ENCODE measurements at regions of chr7 and their contacts with region 1.

Region 1: GRCh38 chr7:88344956-88345832 is 38.5 kb upstream of the STEAP4 start:
- DNase-seq: peak; percentile 10 to 58
- H3K4me3 ChIP-seq: no peak overlapping the region
- H3K27ac ChIP-seq: no peak overlapping the region
- H3K4me1 ChIP-seq: peaks cover 0 to 8% (median 2%) of the 10 kb centered on the region in 4 experiments; a peak in 4 of 7 replicates
- H3K27me3 ChIP-seq: no peaks in the 10 kb centered on the region
- CTCF ChIP-seq: peak; percentile 70 to 77 (median 73)
- EP300 ChIP-seq: no peak
- POLR2A ChIP-seq: no peak
- RAD21 ChIP-seq: peak; percentile 88 to 91

Region 2: DNA sequence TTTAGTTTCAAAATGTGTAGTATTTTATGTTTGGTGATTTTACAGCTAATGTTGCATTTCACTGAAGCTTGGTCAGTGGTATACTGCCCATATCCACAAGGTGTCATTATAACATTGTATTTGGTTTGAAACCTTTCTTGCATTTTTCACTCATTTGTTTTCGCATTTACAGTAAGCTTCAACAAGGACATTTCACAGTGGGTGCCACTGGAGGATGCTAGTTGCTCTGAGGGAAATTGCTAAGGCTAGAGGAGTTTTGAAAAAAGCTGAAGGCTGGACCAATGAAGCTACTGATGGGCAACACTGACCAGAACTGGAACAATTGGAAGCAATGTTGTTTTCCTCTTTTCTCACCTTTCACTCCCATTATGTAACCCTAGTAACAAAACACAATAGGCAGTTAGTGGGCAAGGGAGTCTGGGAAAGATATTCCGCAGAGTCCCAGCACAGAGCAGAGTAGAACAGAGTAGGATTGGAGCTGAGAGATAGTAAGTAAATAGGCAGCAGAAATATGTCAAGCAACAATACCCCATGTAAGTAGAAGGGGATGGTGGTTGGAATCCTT is 101.8 kb before region 1 on chr7:
- CTCF ChIA-PET with region 1: interaction called, 22 read pairs
- POLR2A ChIA-PET with region 1: no interaction called
- DNase-seq: peak in 1 of 2 experiments; percentile 45
- H3K4me3 ChIP-seq: no peak overlapping the region
- H3K27ac ChIP-seq: no peak overlapping the region
- H3K4me1 ChIP-seq: peaks cover 0 to 3% (median 0%) of the 10 kb centered on the region in 4 experiments; a peak in 1 of 7 replicates
- H3K27me3 ChIP-seq: no peaks in the 10 kb centered on the region
- CTCF ChIP-seq: peak in 2 of 3 experiments; percentile 47 to 78; a peak in 2 of 4 replicates
- EP300 ChIP-seq: no peak
- POLR2A ChIP-seq: no peak
- RAD21 ChIP-seq: peak; percentile 89 to 94

Region 3: DNA sequence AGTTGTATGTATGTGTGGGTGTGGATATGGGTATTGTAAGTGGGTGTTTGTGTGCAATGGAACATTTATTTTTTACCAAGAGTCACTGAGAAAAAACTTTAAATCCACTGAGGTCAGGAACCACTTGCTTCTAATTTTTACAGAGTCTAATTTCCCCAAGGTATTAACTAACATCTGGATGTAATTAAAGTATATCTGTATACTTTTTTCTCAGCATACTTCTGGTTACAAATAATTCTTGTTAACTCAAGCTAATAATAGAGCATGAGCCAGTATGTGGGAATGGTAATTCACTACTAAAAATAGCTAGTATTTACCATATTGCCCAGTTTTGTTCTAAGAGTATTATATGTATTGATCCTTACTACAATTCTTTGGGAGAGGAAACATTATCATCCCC is 13.9 kb before region 1 on chr7:
- CTCF ChIA-PET with region 1: interaction called, 14 read pairs
- POLR2A ChIA-PET with region 1: no interaction called
- DNase-seq: no peak
- H3K4me3 ChIP-seq: no peak overlapping the region
- H3K27ac ChIP-seq: no peak overlapping the region
- H3K4me1 ChIP-seq: no peaks in the 10 kb centered on the region
- H3K27me3 ChIP-seq: no peaks in the 10 kb centered on the region
- CTCF ChIP-seq: no peak
- EP300 ChIP-seq: no peak
- POLR2A ChIP-seq: no peak
- RAD21 ChIP-seq: no peak

Region 4: DNA sequence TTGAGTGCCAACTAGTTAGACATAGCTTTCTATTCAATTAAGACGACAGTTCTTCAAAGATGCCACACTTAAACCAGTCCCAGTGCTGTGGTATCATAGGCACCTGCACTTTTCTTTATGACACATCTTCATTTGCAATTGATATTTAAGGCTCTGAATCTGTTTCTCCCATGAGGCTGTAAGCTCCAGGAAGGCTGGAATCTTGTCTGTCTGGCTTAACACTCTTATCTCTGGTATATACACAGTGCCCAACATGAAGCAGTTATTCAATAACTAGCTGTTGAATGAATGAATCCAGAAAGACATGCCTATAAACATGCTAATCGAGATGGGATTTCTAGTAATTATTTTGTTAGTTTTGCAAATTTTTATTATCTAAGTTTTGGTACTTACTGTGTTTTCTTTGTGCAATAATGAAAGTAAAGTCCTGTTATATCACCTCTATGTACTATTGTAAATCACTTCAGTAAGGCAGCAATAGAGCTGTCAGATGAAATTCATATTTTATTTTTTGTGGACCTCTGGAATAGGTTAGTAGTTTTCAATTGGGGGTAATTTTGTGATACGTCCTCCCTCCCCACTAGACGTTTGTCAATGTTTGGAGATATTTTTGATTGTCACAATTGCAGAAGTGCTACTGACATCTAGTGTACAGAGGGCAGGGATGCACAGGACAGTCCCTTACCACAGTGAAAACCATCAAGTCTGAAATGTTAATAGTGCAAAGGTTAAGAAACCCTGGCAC is 12.8 kb after region 1 on chr7:
- CTCF ChIA-PET with region 1: interaction called, 22 read pairs
- POLR2A ChIA-PET with region 1: no interaction called
- DNase-seq: no peak
- H3K4me3 ChIP-seq: no peak overlapping the region
- H3K27ac ChIP-seq: no peak overlapping the region
- H3K4me1 ChIP-seq: no peaks in the 10 kb centered on the region
- H3K27me3 ChIP-seq: no peaks in the 10 kb centered on the region
- CTCF ChIP-seq: peak in 2 of 3 experiments; percentile 4 to 27; a peak in 1 of 4 replicates
- EP300 ChIP-seq: no peak
- POLR2A ChIP-seq: no peak
- RAD21 ChIP-seq: peak; percentile 37 to 56; a peak in 3 of 4 replicates

Region 5: DNA sequence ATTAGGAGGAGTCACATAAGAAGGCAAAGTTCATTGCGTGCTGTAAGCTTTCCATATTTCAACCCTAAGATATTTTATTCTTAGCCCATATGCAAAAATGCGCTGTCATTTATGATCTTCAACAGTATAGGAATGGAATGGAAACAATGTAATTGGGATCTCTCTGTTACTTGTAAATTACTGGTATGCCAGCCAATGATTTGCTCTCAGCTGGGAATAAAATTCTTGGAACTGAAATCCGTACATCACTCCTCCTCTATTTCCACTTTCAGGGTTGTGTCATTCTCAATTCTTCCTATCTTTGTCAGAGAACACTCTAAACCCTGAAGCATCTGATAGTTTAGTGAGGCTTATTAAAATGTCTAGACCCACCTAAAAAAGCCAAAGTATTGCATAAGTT is 42.2 kb after region 1 on chr7:
- CTCF ChIA-PET with region 1: no interaction called
- POLR2A ChIA-PET with region 1: no interaction called
- DNase-seq: no peak
- H3K4me3 ChIP-seq: no peak overlapping the region
- H3K27ac ChIP-seq: no peak overlapping the region
- H3K4me1 ChIP-seq: no peaks in the 10 kb centered on the region
- H3K27me3 ChIP-seq: no peaks in the 10 kb centered on the region
- CTCF ChIP-seq: no peak
- EP300 ChIP-seq: no peak
- POLR2A ChIP-seq: no peak
- RAD21 ChIP-seq: no peak

Region 6: DNA sequence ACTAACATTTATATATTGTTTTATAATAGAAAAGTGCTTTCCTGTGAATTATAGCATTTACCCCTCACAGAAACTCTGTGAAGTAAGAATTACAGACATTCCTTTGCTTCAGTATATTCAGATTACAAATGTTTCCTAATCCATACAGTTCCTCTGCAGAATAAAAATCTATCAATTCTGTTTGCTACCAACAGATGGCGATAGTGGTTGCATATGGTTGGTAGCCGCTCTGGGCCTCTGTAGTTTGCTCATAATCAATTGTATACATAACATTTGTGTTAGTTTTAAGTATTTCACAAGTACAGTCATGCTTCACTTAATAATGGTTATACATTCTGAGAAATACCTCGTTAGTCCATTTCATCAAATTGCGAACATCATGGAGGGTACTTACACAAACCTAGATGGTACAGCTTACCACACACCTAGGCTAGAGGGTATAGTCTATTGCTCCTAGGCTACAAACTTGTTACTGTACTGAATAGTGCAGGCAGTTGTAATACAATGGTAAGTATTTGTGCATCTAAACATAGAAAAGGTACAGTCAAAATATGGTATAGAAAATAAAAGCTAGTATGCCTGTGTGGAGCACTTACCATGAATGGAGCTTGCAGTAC is 55.9 kb after region 1 on chr7:
- CTCF ChIA-PET with region 1: interaction called, 14 read pairs
- POLR2A ChIA-PET with region 1: no interaction called
- DNase-seq: no peak
- H3K4me3 ChIP-seq: no peak overlapping the region
- H3K27ac ChIP-seq: no peak overlapping the region
- H3K4me1 ChIP-seq: no peaks in the 10 kb centered on the region; a peak in 1 of 7 replicates
- H3K27me3 ChIP-seq: no peaks in the 10 kb centered on the region
- CTCF ChIP-seq: peak in 2 of 3 experiments; percentile 51 to 59; a peak in 3 of 4 replicates
- EP300 ChIP-seq: no peak
- POLR2A ChIP-seq: no peak
- RAD21 ChIP-seq: peak; percentile 56 to 63

Region 7: DNA sequence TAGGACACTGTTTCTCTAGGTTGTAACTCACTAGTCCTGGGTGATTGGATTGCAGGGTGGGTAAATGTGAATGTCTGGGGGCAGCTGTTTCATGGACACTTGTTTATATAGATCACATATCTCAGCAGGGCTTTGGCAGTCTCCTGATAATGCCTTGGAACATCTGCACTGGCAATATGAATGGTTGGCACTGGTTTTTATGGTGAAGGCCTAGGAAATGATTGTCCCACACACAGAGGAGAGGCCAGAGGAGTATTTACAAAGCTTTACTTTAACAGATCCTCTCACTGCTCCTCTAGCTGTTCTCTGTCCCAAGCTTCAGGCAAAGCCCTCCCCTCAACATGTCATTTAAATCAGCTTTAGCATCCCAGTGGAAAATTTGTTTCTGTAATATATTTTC is 132.8 kb after region 1 on chr7:
- CTCF ChIA-PET with region 1: no interaction called
- POLR2A ChIA-PET with region 1: no interaction called
- DNase-seq: no peak
- H3K4me3 ChIP-seq: no peak overlapping the region
- H3K27ac ChIP-seq: no peak overlapping the region
- H3K4me1 ChIP-seq: no peaks in the 10 kb centered on the region
- H3K27me3 ChIP-seq: peaks cover 0 to 1% (median 0%) of the 10 kb centered on the region in 4 experiments; a peak in 1 of 7 replicates
- CTCF ChIP-seq: no peak
- EP300 ChIP-seq: no peak
- POLR2A ChIP-seq: no peak
- RAD21 ChIP-seq: no peak